Posterior vena cava (tissue), 2 donors: ENCODE measurements at regions of chr6 and their contacts with region 1.

Region 1: DNA sequence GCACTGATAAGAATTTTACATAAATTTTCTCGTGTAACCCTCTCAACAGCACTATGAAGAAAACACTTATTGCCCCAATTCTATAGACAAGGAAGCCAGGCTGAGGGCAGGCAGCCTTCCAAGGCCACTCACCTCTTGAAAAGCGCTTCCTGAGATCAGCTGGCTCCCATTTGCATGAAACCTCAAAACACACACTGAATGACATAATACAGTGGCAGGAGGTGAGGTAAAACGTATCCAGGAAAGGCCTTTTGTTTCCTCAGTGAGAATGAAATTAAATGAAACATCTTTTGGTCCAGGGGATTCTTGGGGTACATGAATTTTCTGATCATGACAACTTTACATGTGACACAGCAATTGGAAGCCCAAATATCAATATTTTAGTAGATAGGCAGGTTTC is 112.5 kb downstream of the WDR27 start:
- DNase-seq: no peak

Region 2: DNA sequence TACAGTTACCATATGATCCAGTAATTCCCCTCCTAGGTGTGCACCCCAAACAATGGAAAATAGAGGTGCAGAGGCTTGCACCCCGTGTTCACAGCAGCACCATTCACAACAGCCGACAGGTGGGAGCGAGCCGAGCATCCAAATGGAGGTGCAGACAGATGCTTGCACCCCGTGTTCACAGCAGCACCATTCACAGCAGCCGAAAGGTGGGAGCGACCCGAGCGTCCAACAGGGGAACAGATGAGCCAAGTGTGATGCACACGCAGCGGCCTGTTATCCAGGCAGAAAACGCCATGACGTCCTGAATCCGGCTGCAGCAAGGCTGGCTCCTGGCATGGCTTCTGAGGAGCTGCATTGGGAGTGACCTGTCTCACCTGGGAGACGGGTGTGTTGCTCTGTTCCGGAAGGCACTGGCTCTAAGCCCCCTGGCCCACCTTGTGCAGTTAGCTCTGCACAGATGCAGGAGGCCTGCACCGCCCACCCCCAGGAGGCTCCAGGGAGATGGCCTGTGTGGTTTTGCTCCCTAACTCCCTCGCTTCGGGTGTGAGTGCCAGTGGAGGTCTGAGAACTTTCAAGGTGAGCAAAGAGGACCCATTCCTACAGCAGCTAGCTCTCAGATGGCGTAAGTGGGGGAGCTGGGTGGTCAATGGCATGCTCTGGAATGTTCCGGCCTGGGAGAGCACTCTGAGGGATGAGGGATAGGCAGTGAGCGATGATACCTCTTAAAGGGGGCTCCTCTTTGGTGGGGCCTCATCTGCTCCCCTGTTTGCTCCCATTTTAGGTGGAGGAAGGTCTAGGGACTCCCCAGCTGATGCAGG is 1462.5 kb before region 1 on chr6:
- intact Hi-C with region 1: loop called in 1 of 2 experiments (anchors 5 kb)
- DNase-seq: peak; percentile 59

Region 3: GRCh38 chr6:169640351-169640852 is 51.1 kb after region 1 on chr6:
- intact Hi-C with region 1: no loop called
- DNase-seq: no peak